ENCODE measurements at regions of chr15 and their contacts with region 1.

Region 1: DNA sequence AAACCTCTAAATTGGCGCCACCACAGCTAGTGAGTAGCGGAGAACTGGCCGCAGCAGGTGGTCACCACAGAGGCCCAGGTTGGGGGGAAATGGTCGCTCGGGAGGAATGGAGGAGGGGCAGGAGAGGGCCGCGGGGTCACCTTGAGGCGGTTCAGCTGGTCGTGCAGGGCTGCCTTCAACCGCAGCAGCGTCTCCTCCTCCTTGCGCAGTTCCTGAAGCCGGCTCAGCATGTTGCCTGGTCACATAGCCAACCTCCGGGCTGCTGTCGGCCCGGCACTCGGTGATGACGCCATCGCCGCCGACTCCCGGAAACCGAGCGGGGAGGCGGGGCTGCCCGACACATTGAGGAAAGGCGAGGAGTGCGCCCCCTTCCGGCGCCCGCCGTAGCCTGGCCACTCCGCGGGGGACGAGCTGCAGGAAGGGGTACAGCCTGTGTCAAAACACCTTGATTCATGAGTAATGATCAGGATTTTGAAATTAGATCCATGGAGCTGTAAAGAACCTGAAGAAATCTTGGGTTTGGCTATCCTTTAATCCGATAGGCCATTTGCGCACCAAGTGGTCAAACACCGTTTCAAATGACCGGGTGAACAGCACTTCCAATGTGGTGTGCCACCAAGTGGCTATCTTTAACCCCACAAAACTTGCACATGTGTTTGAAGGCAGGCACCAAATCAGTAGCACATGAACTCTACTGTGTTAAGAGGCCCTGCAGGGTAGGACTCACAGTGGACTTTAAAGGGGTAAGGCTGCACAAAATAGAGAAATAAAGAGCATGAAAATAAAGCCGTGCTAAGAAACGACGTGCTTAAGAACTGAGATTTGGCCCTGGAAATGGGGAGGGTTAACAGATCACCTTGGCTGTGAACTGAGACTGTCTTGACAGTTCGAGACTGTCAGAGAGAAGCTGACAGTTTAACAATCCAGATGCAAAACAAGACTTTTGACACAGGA is at the start of gene SNAPC5:
- DNase-seq: peak; percentile 93

Region 2: DNA sequence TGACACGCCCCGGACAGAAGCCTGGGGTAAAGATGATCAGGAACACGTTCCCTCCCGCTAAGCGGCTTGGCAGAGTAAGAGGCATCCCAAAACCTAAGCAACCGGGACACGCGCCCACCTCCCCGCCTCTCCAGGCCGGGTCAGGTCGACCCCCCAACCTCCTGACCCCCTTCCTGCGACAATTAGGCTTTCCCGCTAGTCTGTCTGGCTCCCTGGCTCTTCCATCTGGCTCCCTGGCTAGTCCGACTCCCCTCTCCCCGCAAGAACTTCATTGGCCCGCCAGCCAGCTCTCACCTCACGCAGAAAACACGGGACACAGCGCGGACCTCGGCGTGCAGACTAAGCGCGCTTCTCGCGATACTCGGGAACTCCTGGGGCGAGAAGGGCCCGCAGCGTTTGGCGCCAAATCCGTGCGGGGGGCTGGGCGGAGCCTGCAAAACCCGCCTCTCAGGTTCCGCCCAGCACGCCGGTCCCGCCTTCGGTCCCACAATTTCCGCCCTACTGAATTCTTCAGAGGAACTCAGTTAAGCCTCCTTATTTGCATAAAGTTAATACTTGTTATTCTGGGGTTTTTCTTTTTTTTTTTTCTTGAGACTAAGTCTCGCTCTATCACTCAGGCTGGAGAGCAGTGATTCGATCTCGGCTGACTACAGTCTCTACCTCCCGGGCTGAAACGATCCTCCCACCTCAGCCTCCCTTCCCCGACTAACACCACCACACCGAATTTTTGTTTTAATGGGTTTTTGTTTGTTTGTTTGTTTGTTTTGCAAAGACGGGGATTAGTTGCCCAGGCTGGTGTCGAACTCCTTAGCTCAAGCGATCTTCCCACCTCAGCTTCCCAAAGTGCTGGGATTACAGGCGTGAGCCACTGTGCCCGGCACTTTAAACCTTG is 141.2 kb before region 1 on chr15 and contains the start of gene TIPIN:
- CTCF ChIA-PET with region 1: no interaction called
- POLR2A ChIA-PET with region 1: interaction called, 10 read pairs
- DNase-seq: peak; percentile 95

Region 3: DNA sequence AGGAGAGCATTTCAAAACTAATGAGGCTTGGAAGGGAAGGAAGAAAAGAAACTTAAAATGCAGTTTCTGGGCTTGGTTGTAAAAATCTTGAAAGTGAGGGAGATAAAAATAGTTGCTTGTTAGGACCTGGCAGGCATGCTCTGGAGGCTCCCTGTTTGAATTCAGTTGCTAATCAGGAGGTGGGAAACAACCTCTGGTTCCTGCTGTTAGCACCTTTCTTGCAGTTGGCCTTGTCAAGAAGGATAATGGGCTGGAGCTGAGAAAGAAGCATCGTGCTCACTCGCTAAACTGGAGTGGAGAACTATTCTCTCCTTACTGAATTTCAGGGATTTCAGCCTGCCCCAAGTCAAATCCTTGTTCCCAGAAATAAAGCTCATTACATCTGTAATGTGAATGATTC is 23.6 kb before region 1 on chr15:
- CTCF ChIA-PET with region 1: interaction called, 12 read pairs
- POLR2A ChIA-PET with region 1: interaction called, 5 read pairs
- DNase-seq: no peak